MCF 10A (cell line): ENCODE measurements at regions of chr2 and their contacts with region 1.

Region 1: GRCh38 chr2:98917031-98917471 is 19.0 kb downstream of the CRACDL start:
- DNase-seq: peak; percentile 90
- H3K4me3 Mint-ChIP-seq: peak overlapping the region; percentile 0
- H3K27ac Mint-ChIP-seq: peak overlapping the region; percentile 3
- H3K4me1 Mint-ChIP-seq: peaks cover 56% of the 10 kb centered on the region
- H3K27me3 Mint-ChIP-seq: no peaks in the 10 kb centered on the region
- CTCF ChIP-seq: no peak

Region 2: GRCh38 chr2:97900806-97901205 is 1016.2 kb before region 1 on chr2:
- CTCF ChIA-PET with region 1: no interaction called
- POLR2A ChIA-PET with region 1: no interaction called
- intact Hi-C with region 1: no loop called
- DNase-seq: peak; percentile 43
- H3K4me3 Mint-ChIP-seq: no peak overlapping the region
- H3K27ac Mint-ChIP-seq: no peak overlapping the region
- H3K4me1 Mint-ChIP-seq: peaks cover 20% of the 10 kb centered on the region
- H3K27me3 Mint-ChIP-seq: no peaks in the 10 kb centered on the region
- CTCF ChIP-seq: no peak

Region 3: DNA sequence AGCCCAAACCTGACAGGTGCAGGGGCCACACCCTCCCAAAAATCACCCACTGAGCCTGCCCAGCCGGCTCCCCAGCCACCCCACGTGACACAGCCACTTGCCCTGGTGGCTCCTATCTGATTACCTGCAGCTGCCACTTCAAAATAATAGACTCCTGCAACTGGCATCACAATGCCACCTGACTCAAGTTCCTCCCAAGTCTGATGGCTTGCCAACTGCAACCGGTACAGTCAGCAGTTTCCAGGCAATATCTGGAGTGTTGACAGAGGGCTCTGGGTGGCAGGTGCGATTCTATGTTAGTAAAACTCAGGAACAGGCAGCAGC is 47.1 kb before region 1 on chr2:
- CTCF ChIA-PET with region 1: interaction called, 4 read pairs
- POLR2A ChIA-PET with region 1: interaction called, 68 read pairs
- intact Hi-C with region 1: loop called (anchors 2 kb)
- DNase-seq: peak; percentile 71
- H3K4me3 Mint-ChIP-seq: peak overlapping the region; percentile 72
- H3K27ac Mint-ChIP-seq: peak overlapping the region; percentile 99
- H3K4me1 Mint-ChIP-seq: peaks cover 36% of the 10 kb centered on the region
- H3K27me3 Mint-ChIP-seq: no peaks in the 10 kb centered on the region
- CTCF ChIP-seq: no peak

Region 4: GRCh38 chr2:98936353-98937351 is 19.6 kb after region 1 on chr2:
- CTCF ChIA-PET with region 1: interaction called, 3 read pairs
- POLR2A ChIA-PET with region 1: interaction called, 14 read pairs
- intact Hi-C with region 1: loop called (anchors 1 kb)
- DNase-seq: peak; percentile 39
- H3K4me3 Mint-ChIP-seq: peak overlapping the region; percentile 72
- H3K27ac Mint-ChIP-seq: no peak overlapping the region
- H3K4me1 Mint-ChIP-seq: peaks cover 13% of the 10 kb centered on the region
- H3K27me3 Mint-ChIP-seq: no peaks in the 10 kb centered on the region
- CTCF ChIP-seq: peak; percentile 49